Tibial artery (tissue), 4 donors: ENCODE measurements at regions of chrX and their contacts with region 1.

Region 1: GRCh38 chrX:22748093-22748999 is 251.4 kb upstream of the DDX53 start:
- DNase-seq: peak; percentile 18 to 46
- H3K4me3 ChIP-seq: no peak overlapping the region
- H3K27ac ChIP-seq: no peak overlapping the region
- H3K4me1 ChIP-seq: no peaks in the 10 kb centered on the region
- H3K27me3 ChIP-seq: no peaks in the 10 kb centered on the region
- CTCF ChIP-seq: peak; percentile 48

Region 2: DNA sequence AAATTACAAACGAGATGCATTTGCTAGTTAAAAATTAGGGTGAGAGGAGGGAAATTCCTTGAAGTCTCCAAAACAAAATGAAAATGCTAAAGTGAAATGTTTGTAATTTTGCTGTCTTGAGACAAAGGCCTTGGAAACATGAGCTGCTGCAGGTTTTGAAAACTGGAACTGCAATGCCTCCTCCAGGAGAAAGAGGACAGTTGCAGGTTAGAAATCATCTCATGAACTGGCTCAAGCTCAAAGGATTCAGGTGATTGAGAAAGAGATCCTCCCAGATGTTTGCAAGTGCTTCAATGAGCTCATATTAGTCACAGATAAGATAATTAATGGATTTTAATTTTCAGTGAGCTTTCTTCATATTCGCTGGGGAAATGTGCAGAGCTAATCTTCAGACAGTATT is 1022.9 kb before region 1 on chrX:
- intact Hi-C with region 1: no loop called
- DNase-seq: no peak
- H3K4me3 ChIP-seq: no peak overlapping the region
- H3K27ac ChIP-seq: no peak overlapping the region
- H3K4me1 ChIP-seq: no peaks in the 10 kb centered on the region
- H3K27me3 ChIP-seq: no peaks in the 10 kb centered on the region
- CTCF ChIP-seq: no peak

Region 3: DNA sequence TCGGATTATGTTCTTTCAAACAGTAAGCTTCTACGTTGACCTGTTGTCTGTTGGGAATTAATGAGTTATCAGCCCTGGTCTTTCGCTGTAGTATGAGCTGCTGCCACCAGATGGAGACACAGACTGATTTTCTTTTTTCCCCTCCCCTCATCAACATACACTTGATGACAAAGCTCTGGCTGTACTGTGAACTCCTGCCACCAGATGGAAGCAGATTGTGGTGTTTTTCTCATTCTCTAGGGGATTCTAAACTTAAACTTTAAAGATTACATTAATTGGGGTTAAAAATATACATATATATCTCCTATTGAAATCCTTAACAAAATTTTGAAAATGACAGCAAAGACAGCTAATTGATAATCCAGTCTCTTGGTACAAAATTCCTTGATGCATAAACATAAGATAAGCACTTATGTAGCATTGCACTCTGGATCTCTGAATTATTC is 763.0 kb before region 1 on chrX:
- intact Hi-C with region 1: loop called (anchors 10 kb)
- DNase-seq: peak; percentile 51 to 69
- H3K4me3 ChIP-seq: no peak overlapping the region
- H3K27ac ChIP-seq: no peak overlapping the region
- H3K4me1 ChIP-seq: no peaks in the 10 kb centered on the region
- H3K27me3 ChIP-seq: no peaks in the 10 kb centered on the region
- CTCF ChIP-seq: peak; percentile 79 to 80

Region 4: DNA sequence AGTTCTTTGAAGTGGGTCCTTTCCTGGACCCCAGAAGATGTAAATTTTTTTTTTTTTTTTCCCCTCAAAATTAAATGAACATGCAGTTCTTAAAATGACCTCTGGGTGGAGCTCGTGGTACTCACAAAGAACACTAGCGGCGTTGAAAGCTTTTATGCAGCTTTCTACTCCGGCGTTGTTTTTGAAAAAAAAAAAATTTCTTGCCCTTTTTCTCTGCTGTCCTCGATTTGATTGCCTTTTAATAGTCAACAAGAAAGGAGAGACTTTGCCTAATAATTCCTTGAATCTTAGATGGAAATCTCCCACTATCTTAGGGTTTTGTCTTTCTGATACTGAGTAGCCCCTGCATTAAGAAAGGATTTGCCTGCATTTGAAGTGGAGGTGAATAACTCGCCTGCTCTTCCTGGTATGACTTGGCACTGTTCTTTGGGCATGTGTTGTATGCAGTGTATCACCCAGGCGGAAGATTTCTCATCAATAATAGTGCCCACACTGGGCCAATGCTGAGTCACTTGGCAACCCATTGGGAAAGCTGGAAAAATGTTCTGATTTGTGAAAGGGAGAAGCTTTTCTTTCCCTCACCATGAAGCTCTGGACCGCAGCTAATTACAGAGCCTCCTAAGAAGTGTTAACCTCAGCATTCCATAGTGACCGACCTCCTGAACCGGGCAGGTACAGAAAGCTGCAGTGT is 612.2 kb before region 1 on chrX:
- intact Hi-C with region 1: loop called (anchors 5 kb)
- DNase-seq: peak in 1 of 2 donors; percentile 60
- H3K4me3 ChIP-seq: no peak overlapping the region
- H3K27ac ChIP-seq: peak overlapping the region in 1 of 2 donors; percentile 45
- H3K4me1 ChIP-seq: peaks cover 0 to 13% (median 6%) of the 10 kb centered on the region in 4 donors
- H3K27me3 ChIP-seq: no peaks in the 10 kb centered on the region
- CTCF ChIP-seq: peak; percentile 58 to 64

Region 5: GRCh38 chrX:22712942-22713341 is 35.4 kb before region 1 on chrX:
- intact Hi-C with region 1: no loop called
- DNase-seq: no peak
- H3K4me3 ChIP-seq: no peak overlapping the region
- H3K27ac ChIP-seq: no peak overlapping the region
- H3K4me1 ChIP-seq: no peaks in the 10 kb centered on the region
- H3K27me3 ChIP-seq: no peaks in the 10 kb centered on the region
- CTCF ChIP-seq: no peak